ENCODE measurements at regions of chr1 and their contacts with region 1.

Region 1: DNA sequence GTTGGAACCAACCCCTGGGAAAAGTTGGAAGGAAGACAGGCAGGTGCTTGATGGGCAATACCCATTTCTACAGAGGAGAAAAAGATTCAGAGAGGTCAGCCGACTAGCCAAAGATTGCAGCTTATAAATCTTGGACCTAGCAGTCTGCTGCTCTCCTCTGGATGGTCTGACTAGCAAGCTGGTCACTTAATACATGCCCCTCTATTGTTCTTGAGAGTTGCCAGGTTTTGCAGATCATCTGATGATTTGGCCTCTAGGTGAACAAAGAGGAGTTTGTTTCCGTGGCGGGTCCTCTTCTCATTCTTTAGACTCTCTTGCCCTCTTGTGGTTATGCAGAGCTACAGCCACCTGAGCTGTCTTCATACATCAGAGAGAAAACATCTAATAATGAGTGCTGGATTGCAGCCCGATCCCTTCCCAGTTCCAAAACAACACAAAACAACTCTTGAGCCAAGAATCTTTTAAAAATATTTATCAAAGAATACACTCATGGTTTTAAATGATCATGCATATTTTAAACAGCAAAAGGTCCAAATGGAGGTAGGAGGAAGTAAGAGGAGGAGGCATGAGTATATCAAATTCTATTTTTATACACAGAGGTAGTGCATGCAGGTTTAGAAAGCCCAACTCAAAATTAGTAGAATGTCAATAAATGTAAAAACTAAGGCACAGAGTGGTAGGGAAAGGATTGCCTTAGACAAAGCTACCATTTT is 115.7 kb downstream of the SLC30A10 start:
- DNase-seq: no peak
- ATAC-seq: peak; percentile 67
- H3K4me3 ChIP-seq: no peak overlapping the region
- H3K27ac ChIP-seq: no peak overlapping the region
- H3K4me1 ChIP-seq: no peaks in the 10 kb centered on the region
- H3K27me3 ChIP-seq: peaks cover 6% of the 10 kb centered on the region
- CTCF ChIP-seq: peak; percentile 72

Region 2: DNA sequence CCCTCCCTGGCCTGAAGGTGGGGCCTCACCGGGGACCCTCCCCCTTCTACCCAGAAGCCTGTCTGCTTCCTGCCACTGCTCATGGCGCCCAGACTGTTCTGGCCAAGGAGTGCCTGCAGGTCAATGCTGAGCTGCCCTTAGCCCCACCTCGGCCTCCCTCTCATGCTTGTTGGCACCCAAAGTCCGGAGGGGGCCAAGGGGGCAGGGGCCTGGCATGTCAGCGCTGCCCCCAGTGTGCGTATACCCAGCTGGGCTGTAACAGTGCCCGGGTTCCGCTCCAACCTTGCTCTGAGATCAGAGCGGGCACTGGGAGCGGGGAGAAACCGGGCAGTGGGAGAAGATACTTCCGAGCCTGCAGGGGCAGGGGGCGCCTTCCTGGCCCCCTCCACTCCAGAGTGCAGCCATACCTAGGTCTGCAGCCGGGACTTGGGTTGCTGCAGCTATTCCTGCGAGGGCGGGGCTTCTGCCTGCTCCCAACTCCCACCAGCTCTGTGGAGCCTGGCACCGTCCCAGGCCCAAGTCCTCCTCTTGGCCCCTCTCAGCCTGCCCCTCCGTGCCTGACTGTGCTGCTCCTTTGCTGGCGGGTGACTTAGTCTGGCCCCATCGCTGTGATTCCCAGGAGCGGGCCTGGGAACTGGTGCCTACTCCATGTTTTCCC is 1489.0 kb before region 1 on chr1:
- intact Hi-C with region 1: loop called (anchors 10 kb)
- DNase-seq: no peak
- ATAC-seq: peak; percentile 30
- H3K4me3 ChIP-seq: no peak overlapping the region
- H3K27ac ChIP-seq: no peak overlapping the region
- H3K4me1 ChIP-seq: no peaks in the 10 kb centered on the region
- H3K27me3 ChIP-seq: no peaks in the 10 kb centered on the region
- CTCF ChIP-seq: no peak